Calu3 (cell line): ENCODE measurements at regions of chr17 and their contacts with region 1.

Region 1: GRCh38 chr17:51120739-51121617 is at the start of gene SPAG9:
- DNase-seq: peak; percentile 99
- H3K4me3 Mint-ChIP-seq: peak within 1 kb of the TSS; percentile 99
- H3K27ac Mint-ChIP-seq: peak within 1 kb of the TSS; percentile 98
- H3K4me1 Mint-ChIP-seq: peaks cover 60% of the 10 kb centered on the region
- H3K27me3 Mint-ChIP-seq: no peaks in the 10 kb centered on the region
- CTCF ChIP-seq: no peak
- total RNA-seq, gene SPAG9: 126 and 129 TPM in 2 replicates

Region 2: DNA sequence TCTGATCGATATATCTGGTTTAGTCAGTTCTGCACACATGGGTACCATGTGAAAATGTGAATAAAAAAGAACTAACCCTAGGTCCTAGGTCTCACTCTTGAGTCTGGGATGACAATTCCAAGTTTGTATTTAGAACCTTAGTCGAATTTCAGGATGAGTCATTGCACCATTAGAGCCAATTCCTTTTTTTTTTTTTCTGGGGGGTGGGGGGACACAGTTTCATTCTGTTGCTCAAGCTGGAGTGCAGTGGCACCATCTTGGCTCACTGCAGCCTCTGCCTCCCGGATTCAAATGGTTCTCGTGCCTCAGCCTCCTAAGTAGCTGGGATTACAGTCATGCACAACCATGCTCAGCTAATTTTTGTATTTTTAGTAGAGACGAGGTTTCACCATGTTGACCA is 41.9 kb before region 1 on chr17:
- CTCF ChIA-PET with region 1: no interaction called
- intact Hi-C with region 1: no loop called
- DNase-seq: no peak
- H3K4me3 Mint-ChIP-seq: no peak overlapping the region
- H3K27ac Mint-ChIP-seq: no peak overlapping the region
- H3K4me1 Mint-ChIP-seq: peaks cover 19% of the 10 kb centered on the region
- H3K27me3 Mint-ChIP-seq: no peaks in the 10 kb centered on the region
- CTCF ChIP-seq: no peak

Region 3: GRCh38 chr17:51153210-51154072 is 32.5 kb after region 1 on chr17 and contains the start of gene NME1:
- CTCF ChIA-PET with region 1: interaction called, 37 read pairs
- intact Hi-C with region 1: loop called (anchors 1 kb)
- DNase-seq: peak; percentile 99
- H3K4me3 Mint-ChIP-seq: no peak within 1 kb of the TSS
- H3K27ac Mint-ChIP-seq: no peak within 1 kb of the TSS
- H3K4me1 Mint-ChIP-seq: no peaks in the 10 kb centered on the region
- H3K27me3 Mint-ChIP-seq: no peaks in the 10 kb centered on the region
- CTCF ChIP-seq: peak; percentile 89
- total RNA-seq, gene NME1: 351 and 365 TPM in 2 replicates

Region 4: GRCh38 chr17:51275381-51275780 is 154.4 kb after region 1 on chr17:
- CTCF ChIA-PET with region 1: interaction called, 12 read pairs
- intact Hi-C with region 1: no loop called
- DNase-seq: no peak
- H3K4me3 Mint-ChIP-seq: no peak overlapping the region
- H3K27ac Mint-ChIP-seq: no peak overlapping the region
- H3K4me1 Mint-ChIP-seq: peaks cover 19% of the 10 kb centered on the region
- H3K27me3 Mint-ChIP-seq: no peaks in the 10 kb centered on the region
- CTCF ChIP-seq: no peak

Region 5: GRCh38 chr17:51322390-51323029 is 201.5 kb after region 1 on chr17:
- CTCF ChIA-PET with region 1: interaction called, 12 read pairs
- intact Hi-C with region 1: no loop called
- DNase-seq: peak; percentile 36
- H3K4me3 Mint-ChIP-seq: no peak overlapping the region
- H3K27ac Mint-ChIP-seq: no peak overlapping the region
- H3K4me1 Mint-ChIP-seq: peaks cover 14% of the 10 kb centered on the region
- H3K27me3 Mint-ChIP-seq: peaks cover 53% of the 10 kb centered on the region
- CTCF ChIP-seq: peak; percentile 73